ENCODE measurements at regions of chr3 and their contacts with region 1.

Region 1: DNA sequence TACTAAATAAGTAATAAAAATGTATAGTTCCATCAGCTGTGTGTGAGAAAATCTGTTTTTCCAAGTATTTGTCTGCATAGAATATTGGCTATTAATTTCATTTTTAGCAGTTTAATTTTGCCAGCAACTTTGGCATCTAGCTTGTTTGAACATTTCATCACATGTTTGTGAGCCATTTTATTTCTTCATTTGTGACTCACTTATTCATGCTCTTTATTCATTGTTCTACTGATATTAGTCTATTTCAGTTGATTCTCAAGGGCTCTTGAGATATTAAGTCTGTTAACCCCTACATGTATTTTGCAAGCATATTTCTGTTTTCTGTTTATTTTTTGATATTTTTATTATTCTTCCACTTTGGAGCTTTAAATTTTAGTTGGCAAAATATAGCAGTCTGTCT is 74.0 kb upstream of the PHLDB2 start:
- DNase-seq: no peak
- ATAC-seq: no peak
- H3K4me3 Mint-ChIP-seq: no peak overlapping the region
- H3K27ac Mint-ChIP-seq: no peak overlapping the region
- H3K4me1 Mint-ChIP-seq: no peaks in the 10 kb centered on the region
- H3K27me3 Mint-ChIP-seq: no peaks in the 10 kb centered on the region
- CTCF ChIP-seq: no peak

Region 2: GRCh38 chr3:111700054-111700453 is 85.0 kb before region 1 on chr3:
- CTCF ChIA-PET with region 1: no interaction called
- POLR2A ChIA-PET with region 1: no interaction called
- intact Hi-C with region 1: no loop called
- DNase-seq: no peak
- ATAC-seq: no peak
- H3K4me3 Mint-ChIP-seq: peak overlapping the region; percentile 36
- H3K27ac Mint-ChIP-seq: no peak overlapping the region
- H3K4me1 Mint-ChIP-seq: peaks cover 24% of the 10 kb centered on the region
- H3K27me3 Mint-ChIP-seq: no peaks in the 10 kb centered on the region
- CTCF ChIP-seq: no peak

Region 3: DNA sequence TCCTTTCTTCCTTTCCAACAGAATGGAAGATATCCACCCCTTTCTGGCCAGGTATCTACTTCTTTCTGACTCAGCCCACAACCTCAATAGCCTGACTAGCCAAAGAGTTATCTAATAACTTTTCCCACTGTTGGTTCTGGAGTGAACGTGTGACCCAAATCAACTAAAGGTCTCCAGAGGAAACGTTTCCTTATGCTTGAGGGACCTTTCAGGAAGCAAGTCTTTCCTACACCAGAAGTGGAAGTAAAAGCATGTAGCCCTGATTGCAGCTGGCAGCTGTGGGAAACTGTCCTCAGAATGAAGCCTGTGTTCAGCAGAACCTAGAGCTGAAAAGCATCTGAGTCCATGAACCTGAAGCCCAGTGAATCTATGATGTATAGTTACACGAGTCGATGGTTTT is 39.3 kb after region 1 on chr3:
- CTCF ChIA-PET with region 1: no interaction called
- POLR2A ChIA-PET with region 1: no interaction called
- intact Hi-C with region 1: loop called (anchors 1 kb)
- DNase-seq: no peak
- ATAC-seq: no peak
- H3K4me3 Mint-ChIP-seq: no peak overlapping the region
- H3K27ac Mint-ChIP-seq: no peak overlapping the region
- H3K4me1 Mint-ChIP-seq: no peaks in the 10 kb centered on the region
- H3K27me3 Mint-ChIP-seq: no peaks in the 10 kb centered on the region
- CTCF ChIP-seq: no peak

Measured in activated B cell treated with CpG ODN at 0.5 μM for 24 hours (primary cell).